ENCODE measurements at regions of chr3 and their contacts with region 1.

Region 1: DNA sequence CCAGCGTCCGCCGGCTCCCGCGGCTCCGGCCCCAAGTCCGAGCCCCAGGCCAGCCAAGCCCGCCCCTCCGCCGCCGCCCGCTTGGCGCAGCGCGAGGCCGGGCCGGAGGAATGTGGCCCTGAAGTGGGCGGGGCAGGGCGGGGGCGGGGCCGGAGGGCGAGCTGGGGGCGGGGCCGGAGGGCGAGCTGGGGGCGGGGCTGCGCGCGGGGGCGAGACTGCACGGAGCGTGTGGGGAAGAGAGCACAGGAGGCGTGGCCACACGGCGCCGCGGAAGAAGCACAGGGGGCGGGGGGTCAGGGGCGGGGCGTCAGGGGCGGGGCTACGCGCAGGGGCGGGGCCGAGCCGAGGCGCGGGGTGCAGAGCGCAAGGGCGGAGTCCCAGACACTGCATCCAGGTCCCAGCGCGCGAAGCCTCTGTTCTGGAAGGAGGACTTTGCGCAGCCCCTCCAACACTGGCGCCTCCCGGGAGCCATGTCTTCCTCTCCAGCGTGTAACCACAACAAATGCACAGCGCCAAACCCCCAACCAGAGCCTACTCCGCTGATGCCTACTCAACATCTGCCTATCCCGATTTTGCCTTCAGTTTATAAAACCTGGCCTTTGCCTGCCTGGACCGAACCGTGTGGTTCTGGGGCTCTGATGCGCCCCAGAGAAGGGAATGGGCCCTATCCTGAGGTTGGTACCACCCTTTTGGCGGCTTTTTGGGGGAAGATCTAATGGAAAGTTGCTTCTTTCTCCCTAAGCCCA is 105.5 kb downstream of the IQSEC1 start:
- DNase-seq: peak; percentile 90
- ATAC-seq: peak; percentile 95
- H3K4me3 Mint-ChIP-seq: peak overlapping the region; percentile 71
- H3K27ac Mint-ChIP-seq: no peak overlapping the region
- H3K4me1 Mint-ChIP-seq: peaks cover 51% of the 10 kb centered on the region
- H3K27me3 Mint-ChIP-seq: no peaks in the 10 kb centered on the region
- CTCF ChIP-seq: no peak

Region 2: GRCh38 chr3:12948891-12949711 is 18.7 kb before region 1 on chr3:
- CTCF ChIA-PET with region 1: interaction called, 14 read pairs
- POLR2A ChIA-PET with region 1: interaction called, 3 read pairs
- intact Hi-C with region 1: no loop called
- DNase-seq: peak; percentile 78
- ATAC-seq: peak; percentile 89
- H3K4me3 Mint-ChIP-seq: peak overlapping the region; percentile 17
- H3K27ac Mint-ChIP-seq: peak overlapping the region; percentile 76
- H3K4me1 Mint-ChIP-seq: peaks cover 44% of the 10 kb centered on the region
- H3K27me3 Mint-ChIP-seq: no peaks in the 10 kb centered on the region
- CTCF ChIP-seq: peak; percentile 18

Region 3: GRCh38 chr3:13004376-13004775 is 36.6 kb after region 1 on chr3:
- CTCF ChIA-PET with region 1: no interaction called
- POLR2A ChIA-PET with region 1: no interaction called
- intact Hi-C with region 1: no loop called
- DNase-seq: no peak
- ATAC-seq: no peak
- H3K4me3 Mint-ChIP-seq: no peak overlapping the region
- H3K27ac Mint-ChIP-seq: peak overlapping the region; percentile 5
- H3K4me1 Mint-ChIP-seq: peaks cover 85% of the 10 kb centered on the region
- H3K27me3 Mint-ChIP-seq: no peaks in the 10 kb centered on the region
- CTCF ChIP-seq: no peak

Measured in activated CD8-positive, alpha-beta T cell treated with anti-CD3 and anti-CD28 coated beads for 36 hours (primary cell).